Caco-2 (cell line): ENCODE measurements at regions of chrX and their contacts with region 1.

Region 1: GRCh38 chrX:124151195-124151594 is 181.3 kb upstream of the TEX13D start:
- DNase-seq: no peak
- H3K4me3 ChIP-seq: no peak overlapping the region
- H3K4me3 Mint-ChIP-seq: no peak overlapping the region
- H3K27ac Mint-ChIP-seq: no peak overlapping the region
- H3K4me1 ChIP-seq: peaks cover 10% of the 10 kb centered on the region; the same call in 1 of the 2 replicates
- H3K4me1 Mint-ChIP-seq: peaks cover 6% of the 10 kb centered on the region
- H3K27me3 ChIP-seq: no peaks in the 10 kb centered on the region
- H3K27me3 Mint-ChIP-seq: no peaks in the 10 kb centered on the region
- CTCF ChIP-seq: no peak

Region 2: DNA sequence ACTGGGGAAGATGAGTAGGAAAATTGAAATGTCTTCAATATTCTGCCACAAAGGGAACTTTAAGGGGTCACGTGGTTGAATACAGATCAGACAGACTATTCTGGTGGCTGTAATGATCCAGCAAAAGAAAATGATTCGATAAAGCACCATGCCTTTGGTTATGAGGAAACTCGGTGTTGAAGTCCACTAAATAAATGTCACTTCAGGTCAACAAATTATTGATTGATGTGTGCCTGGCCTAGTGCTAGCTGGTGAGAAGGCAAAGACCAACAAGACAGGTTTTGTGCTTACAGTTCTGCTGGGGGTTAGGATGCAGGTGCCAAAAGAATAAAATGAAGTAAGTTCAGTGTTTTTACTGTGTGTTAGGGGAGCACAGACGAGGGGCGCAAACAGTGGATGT is 47.2 kb before region 1 on chrX:
- CTCF ChIA-PET with region 1: no interaction called
- POLR2A ChIA-PET with region 1: no interaction called
- intact Hi-C with region 1: no loop called
- DNase-seq: no peak
- H3K4me3 ChIP-seq: no peak overlapping the region
- H3K4me3 Mint-ChIP-seq: no peak overlapping the region
- H3K27ac Mint-ChIP-seq: no peak overlapping the region
- H3K4me1 ChIP-seq: no peaks in the 10 kb centered on the region
- H3K4me1 Mint-ChIP-seq: no peaks in the 10 kb centered on the region
- H3K27me3 ChIP-seq: no peaks in the 10 kb centered on the region
- H3K27me3 Mint-ChIP-seq: no peaks in the 10 kb centered on the region
- CTCF ChIP-seq: no peak

Region 3: DNA sequence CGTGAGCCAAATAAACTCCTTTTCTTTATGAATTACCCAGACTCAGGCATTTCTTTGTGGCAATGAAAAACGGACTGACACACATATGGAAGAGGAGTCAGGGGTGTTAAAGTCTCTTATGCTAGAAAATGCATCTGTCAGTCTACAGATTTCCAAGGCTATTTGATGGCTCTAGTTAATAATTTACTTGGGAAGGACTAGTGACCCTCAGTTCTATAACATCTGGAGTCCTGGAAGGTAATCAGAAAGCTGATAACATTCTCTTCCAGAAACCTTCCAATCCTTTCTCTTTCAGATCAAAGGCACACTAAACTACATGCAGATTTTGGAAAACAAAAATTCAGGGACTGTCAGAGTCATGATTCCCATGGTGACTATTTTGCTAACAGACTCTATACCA is 39.2 kb after region 1 on chrX:
- CTCF ChIA-PET with region 1: no interaction called
- POLR2A ChIA-PET with region 1: no interaction called
- intact Hi-C with region 1: loop called (anchors 2 kb)
- DNase-seq: peak in 1 of 2 experiments; percentile 27
- H3K4me3 ChIP-seq: no peak overlapping the region
- H3K4me3 Mint-ChIP-seq: peak overlapping the region; percentile 37
- H3K27ac Mint-ChIP-seq: peak overlapping the region; percentile 76
- H3K4me1 ChIP-seq: peaks cover 19% of the 10 kb centered on the region
- H3K4me1 Mint-ChIP-seq: peaks cover 14% of the 10 kb centered on the region
- H3K27me3 ChIP-seq: no peaks in the 10 kb centered on the region
- H3K27me3 Mint-ChIP-seq: no peaks in the 10 kb centered on the region
- CTCF ChIP-seq: no peak

Region 4: DNA sequence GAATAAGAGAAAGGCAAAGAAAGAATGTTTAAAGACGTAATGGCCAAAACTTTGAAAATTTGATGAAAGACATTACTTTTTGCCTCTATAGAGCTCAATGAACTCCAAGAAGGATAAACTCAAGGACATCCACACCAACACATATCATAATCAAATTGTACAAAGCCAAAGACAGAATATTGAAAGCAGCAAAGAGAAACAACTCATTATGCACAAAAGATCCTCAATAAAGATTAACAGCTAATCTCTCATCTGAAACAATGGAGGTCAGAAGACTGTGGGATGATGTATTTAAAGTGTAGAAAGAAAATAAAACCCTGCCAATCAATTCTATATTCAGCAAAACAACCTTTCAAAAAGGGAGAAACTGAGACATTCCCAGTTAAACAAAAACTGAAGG is 52.1 kb after region 1 on chrX:
- CTCF ChIA-PET with region 1: no interaction called
- POLR2A ChIA-PET with region 1: no interaction called
- intact Hi-C with region 1: no loop called
- DNase-seq: no peak
- H3K4me3 ChIP-seq: no peak overlapping the region
- H3K4me3 Mint-ChIP-seq: no peak overlapping the region
- H3K27ac Mint-ChIP-seq: no peak overlapping the region
- H3K4me1 ChIP-seq: no peaks in the 10 kb centered on the region
- H3K4me1 Mint-ChIP-seq: no peaks in the 10 kb centered on the region
- H3K27me3 ChIP-seq: no peaks in the 10 kb centered on the region
- H3K27me3 Mint-ChIP-seq: no peaks in the 10 kb centered on the region
- CTCF ChIP-seq: no peak

Region 5: DNA sequence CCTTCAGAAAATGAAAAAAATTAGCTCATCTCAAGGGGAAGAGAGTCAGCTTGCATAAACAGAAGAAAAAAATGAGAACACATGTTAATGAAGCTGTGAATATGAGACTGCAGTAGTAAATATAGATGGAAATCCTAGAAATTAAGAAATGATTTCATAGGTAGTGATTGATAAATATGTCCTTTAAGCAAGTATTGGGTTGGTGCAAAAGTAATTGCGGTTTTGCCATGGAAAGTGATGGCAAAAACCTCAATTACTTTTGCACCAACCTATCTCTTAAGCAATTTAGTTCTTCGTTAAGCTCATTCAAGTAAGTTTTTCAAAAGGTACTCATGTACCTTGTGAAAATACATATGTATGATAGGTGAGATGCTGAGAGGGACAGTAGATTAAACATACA is 596.1 kb after region 1 on chrX:
- CTCF ChIA-PET with region 1: no interaction called
- POLR2A ChIA-PET with region 1: no interaction called
- intact Hi-C with region 1: no loop called
- DNase-seq: no peak
- H3K4me3 ChIP-seq: no peak overlapping the region
- H3K4me3 Mint-ChIP-seq: no peak overlapping the region
- H3K27ac Mint-ChIP-seq: no peak overlapping the region
- H3K4me1 ChIP-seq: no peaks in the 10 kb centered on the region
- H3K4me1 Mint-ChIP-seq: no peaks in the 10 kb centered on the region
- H3K27me3 ChIP-seq: no peaks in the 10 kb centered on the region
- H3K27me3 Mint-ChIP-seq: no peaks in the 10 kb centered on the region
- CTCF ChIP-seq: no peak